H1 (cell line): ENCODE measurements at regions of chr14 and their contacts with region 1.

Region 1: GRCh38 chr14:77040059-77040740 is 11.7 kb upstream of the IRF2BPL start:
- DNase-seq: peak in 1 of 2 experiments; percentile 80
- H3K4me3 ChIP-seq: peak overlapping the region; percentile 22 to 58 (median 52); a peak in 7 of 8 replicates
- H3K27ac ChIP-seq: no peak overlapping the region
- H3K4me1 ChIP-seq: peaks cover 33 to 65% (median 41%) of the 10 kb centered on the region in 4 experiments; a peak in 6 of 7 replicates
- H3K27me3 ChIP-seq: peaks cover 0 to 4% (median 2%) of the 10 kb centered on the region in 4 experiments; a peak in 2 of 7 replicates
- CTCF ChIP-seq: no peak
- EP300 ChIP-seq: no peak; a peak in 1 of 3 replicates
- POLR2A ChIP-seq: no peak
- RAD21 ChIP-seq: no peak

Region 2: DNA sequence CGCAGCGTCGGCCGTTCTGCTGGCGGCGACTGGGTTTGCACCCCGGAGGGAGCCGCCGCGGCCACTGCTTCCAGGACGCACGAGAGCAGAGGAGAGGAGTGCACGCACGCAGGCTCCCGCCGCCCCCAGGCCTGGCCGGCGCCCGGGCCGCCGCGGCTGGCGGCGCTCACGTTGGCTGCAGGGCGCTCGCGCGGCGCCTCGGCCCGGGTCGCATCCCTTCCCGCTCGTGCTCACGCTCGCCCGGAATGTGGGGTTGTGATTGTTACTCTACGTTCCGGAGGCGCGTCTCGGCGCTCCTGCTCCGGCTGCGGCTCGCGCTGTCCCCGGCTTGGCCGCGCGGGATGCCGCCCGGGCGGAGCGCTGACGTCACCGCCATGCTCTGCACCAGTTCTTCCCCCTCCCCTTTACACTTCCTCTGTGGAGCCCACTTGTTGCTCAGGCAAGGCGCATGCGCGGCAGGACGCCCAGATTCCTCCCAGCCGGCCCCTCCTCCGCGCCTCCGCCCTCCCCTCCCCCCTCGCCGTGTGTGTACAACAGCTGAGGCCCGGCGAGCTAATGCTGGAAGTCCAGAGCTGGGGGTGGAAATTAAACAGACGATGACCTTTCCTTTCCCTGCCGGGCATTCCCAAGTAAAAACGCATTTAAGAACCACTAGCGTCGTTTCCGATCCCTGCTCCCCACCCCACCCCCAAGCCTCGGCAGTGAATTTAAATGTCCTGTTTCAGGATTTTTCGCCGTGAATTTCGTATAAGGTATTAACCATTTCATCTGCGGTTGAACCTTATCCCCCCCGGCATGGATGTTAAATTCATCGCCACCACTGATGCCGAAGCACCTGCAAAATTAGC is 11.6 kb before region 1 on chr14 and contains the start of gene IRF2BPL:
- CTCF ChIA-PET with region 1: interaction called, 13 read pairs
- POLR2A ChIA-PET with region 1: interaction called, 92 read pairs
- DNase-seq: peak in 1 of 2 experiments; percentile 88
- H3K4me3 ChIP-seq: peak within 1 kb of the TSS; percentile 61 to 86 (median 70)
- H3K27ac ChIP-seq: peak within 1 kb of the TSS; percentile 91
- H3K4me1 ChIP-seq: peaks cover 6 to 40% (median 27%) of the 10 kb centered on the region in 4 experiments
- H3K27me3 ChIP-seq: peaks cover 0 to 5% (median 3%) of the 10 kb centered on the region in 4 experiments; a peak in 5 of 7 replicates
- CTCF ChIP-seq: no peak
- EP300 ChIP-seq: 0 out of 3 replicates have a peak, but pooled peaks of 1 of the 2 experiments have one; percentile 42
- POLR2A ChIP-seq: peak in 1 of 2 experiments; percentile 85; a peak in 2 of 3 replicates
- RAD21 ChIP-seq: peak; percentile 0 to 1; a peak in 2 of 4 replicates
- total RNA-seq, gene IRF2BPL: 57.0 and 59.6 TPM in 2 replicates

Region 3: DNA sequence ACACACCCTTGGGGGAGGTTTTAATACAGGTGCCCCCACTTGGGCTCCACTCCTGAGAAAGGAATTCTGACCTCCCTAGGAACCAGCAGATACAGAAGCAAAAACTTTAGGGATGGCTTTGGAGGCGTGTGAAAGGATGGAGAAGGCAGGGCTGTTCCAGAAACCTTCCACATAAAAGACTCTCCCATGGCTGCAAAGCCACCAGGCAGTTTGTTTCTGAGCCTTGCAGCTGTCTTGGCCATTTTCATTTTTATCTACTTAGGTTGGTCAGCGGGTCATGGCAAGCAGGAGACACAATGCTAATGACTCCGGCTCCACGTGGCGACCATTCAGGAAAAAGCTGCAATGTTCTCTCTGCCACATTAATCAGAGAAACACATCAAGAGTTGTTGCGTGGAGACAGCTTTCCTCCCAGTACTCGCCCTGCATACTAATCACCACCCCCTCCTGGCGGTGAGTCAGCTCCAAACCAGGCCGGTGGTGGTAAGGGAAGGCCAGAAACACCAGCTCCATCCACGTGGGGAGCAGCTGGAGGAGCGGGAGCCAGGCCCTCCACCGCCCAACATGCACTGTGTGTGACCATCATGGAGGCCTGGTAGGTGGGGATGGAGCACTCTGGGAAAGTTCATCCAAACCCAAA is 19.2 kb after region 1 on chr14:
- CTCF ChIA-PET with region 1: interaction called, 76 read pairs
- POLR2A ChIA-PET with region 1: interaction called, 3 read pairs
- DNase-seq: no peak
- H3K4me3 ChIP-seq: no peak overlapping the region
- H3K27ac ChIP-seq: no peak overlapping the region
- H3K4me1 ChIP-seq: peaks cover 3 to 12% (median 4%) of the 10 kb centered on the region in 4 experiments; a peak in 5 of 7 replicates
- H3K27me3 ChIP-seq: no peaks in the 10 kb centered on the region
- CTCF ChIP-seq: peak; percentile 46 to 60 (median 55)
- EP300 ChIP-seq: no peak
- POLR2A ChIP-seq: no peak
- RAD21 ChIP-seq: peak; percentile 47 to 56; a peak in 3 of 4 replicates

Region 4: GRCh38 chr14:77177702-77178101 is 137.5 kb after region 1 on chr14:
- CTCF ChIA-PET with region 1: no interaction called
- POLR2A ChIA-PET with region 1: no interaction called
- DNase-seq: no peak
- H3K4me3 ChIP-seq: no peak overlapping the region
- H3K27ac ChIP-seq: no peak overlapping the region
- H3K4me1 ChIP-seq: peaks cover 3 to 11% (median 7%) of the 10 kb centered on the region in 4 experiments; a peak in 6 of 7 replicates
- H3K27me3 ChIP-seq: no peaks in the 10 kb centered on the region
- CTCF ChIP-seq: no peak
- EP300 ChIP-seq: no peak
- POLR2A ChIP-seq: no peak
- RAD21 ChIP-seq: no peak